ENCODE measurements at regions of chr19 and their contacts with region 1.

Region 1: DNA sequence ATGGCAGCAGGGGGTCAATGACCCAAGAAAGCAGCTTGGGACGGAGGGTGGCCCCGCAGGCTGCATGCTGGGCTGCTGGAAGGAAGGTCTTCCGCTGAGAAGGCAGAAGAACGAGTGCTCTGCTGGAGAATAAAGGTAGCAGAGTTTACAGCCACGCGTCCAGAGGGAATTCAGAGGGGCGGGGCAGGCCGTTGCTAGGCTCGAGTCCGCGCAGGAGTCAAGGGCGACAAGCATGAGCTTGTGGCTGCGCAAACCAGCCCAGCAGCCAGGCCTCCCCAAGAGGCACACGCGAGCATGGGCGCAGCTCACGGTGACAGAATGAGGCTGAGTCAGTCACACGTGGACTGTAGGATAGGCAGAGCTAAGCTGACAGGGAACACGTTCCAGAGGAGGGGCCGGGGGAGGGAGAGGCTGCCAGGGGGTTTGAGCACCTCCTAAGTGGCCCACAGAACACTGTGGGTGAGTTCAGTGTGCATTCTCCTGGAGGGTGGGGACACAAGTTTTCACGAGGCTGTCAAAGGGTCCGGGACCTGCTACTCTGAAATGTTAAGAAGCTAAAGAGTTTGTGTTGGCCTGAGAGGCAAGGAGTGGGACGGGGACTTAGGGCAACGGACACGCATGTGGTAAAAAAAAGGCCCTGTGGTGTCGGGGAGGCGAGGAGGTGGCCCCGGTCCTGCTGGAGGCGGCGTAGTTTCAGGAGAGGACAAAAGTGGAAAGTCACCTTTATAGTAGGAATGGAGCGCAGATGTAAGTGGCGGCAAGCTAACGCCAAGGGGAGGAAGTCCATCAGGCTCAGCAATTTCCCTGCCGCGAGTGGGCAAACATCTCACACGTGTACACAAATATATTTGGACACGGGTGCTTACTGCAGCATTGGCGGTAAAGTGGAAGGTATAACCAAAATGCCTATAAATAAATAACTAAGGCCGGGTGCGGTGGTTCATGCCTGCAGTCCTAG is 17.7 kb downstream of the RFX2 start:
- DNase-seq: peak; percentile 89
- H3K27ac ChIP-seq: peak overlapping the region; percentile 96
- CTCF ChIP-seq: no peak

Region 2: GRCh38 chr19:6076675-6077463 is 15.7 kb before region 1 on chr19:
- CTCF ChIA-PET with region 1: no interaction called
- POLR2A ChIA-PET with region 1: interaction called, 10 read pairs
- DNase-seq: peak; percentile 76
- H3K27ac ChIP-seq: peak overlapping the region; percentile 98
- CTCF ChIP-seq: no peak

Region 3: GRCh38 chr19:6150289-6150688 is 57.7 kb after region 1 on chr19:
- CTCF ChIA-PET with region 1: no interaction called
- POLR2A ChIA-PET with region 1: no interaction called
- DNase-seq: no peak
- H3K27ac ChIP-seq: no peak overlapping the region
- CTCF ChIP-seq: no peak

Region 4: GRCh38 chr19:6362027-6362350 is 269.4 kb after region 1 on chr19:
- CTCF ChIA-PET with region 1: interaction called, 5 read pairs
- POLR2A ChIA-PET with region 1: interaction called, 10 read pairs
- DNase-seq: peak; percentile 20
- H3K27ac ChIP-seq: peak overlapping the region; percentile 85
- CTCF ChIP-seq: no peak

Region 5: DNA sequence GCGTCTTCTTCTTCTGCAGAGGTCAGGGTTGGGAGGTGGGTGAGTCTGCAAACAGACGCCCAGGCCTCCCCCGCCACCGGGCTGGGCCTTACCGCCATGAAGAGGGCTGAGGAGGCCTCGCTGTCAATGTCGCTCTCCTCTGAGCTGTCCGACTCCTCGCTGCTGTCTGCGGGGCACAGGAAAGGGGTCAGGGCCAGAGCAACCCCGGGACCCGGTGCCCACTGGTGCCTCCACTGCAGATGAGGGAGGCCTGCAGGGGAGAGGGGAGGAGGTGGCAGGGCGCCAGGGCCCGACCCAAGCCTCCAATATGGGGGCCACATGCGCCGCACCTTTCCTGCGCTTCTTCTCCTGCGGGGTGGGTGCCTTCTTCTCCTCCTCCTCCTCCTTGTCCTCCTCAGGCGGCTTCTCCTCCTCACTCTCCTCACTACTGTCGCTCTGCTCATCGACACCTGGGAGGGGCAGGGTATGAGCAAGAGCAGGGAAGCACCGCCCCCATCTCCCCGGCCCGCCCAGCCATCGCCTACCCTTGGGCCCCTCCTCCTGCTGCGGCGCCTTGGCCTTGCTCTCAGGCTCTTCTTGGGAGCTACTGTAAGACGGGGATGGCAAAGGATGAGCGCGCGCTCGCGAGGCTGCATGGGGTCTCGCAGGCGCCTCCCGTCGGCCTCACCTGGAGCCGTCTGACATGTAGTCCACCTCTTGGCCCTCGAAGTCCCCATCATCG is 288.6 kb after region 1 on chr19:
- CTCF ChIA-PET with region 1: no interaction called
- POLR2A ChIA-PET with region 1: interaction called, 12 read pairs
- DNase-seq: no peak
- H3K27ac ChIP-seq: no peak overlapping the region; the same call in 1 of the 2 replicates
- CTCF ChIP-seq: no peak